Left ventricle myocardium inferior (tissue), 1 donor: ENCODE measurements at regions of chr21 and their contacts with region 1.

Region 1: DNA sequence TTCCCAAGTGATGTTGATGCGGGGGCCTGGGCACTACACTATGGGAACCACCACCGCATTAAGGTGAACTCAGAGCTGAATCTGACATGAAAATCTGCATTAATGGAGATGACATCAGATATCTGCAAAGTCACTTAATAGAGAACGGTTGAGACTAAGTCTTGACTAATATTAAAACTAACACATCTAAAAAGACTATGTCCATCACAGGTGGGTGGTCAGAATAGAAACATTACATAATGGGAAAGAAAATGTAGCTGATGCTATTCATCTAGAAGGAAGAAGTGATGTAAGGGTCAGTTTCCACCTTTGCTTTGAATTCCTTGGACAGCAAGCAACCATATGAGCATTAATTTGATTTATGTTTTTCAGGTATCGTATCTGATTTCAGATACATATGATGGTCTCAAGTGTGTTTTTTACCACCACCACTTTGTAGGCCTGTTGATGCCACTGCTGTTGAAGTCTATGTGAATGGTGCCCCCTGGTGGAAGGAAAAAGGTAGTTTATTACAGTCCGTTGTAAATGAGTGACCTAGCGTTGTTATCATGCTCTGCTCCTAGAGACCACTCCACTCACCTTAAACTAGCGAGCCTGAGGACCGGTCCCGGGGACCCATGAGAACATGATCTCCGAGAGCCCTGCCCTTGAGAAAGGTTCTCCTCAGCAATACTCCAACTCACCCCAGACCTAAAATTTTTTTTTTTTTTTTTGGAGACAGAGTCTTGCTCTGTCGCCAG is 73.5 kb downstream of the BACH1 start:
- DNase-seq: no peak
- H3K4me3 ChIP-seq: no peak overlapping the region
- H3K27ac ChIP-seq: no peak overlapping the region
- H3K4me1 ChIP-seq: peaks cover 7% of the 10 kb centered on the region
- H3K27me3 ChIP-seq: no peaks in the 10 kb centered on the region
- CTCF ChIP-seq: peak; percentile 76

Region 2: GRCh38 chr21:29168886-29169285 is 203.3 kb before region 1 on chr21:
- intact Hi-C with region 1: loop called (anchors 5 kb)
- DNase-seq: no peak
- H3K4me3 ChIP-seq: no peak overlapping the region
- H3K27ac ChIP-seq: no peak overlapping the region
- H3K4me1 ChIP-seq: peaks cover 8% of the 10 kb centered on the region
- H3K27me3 ChIP-seq: no peaks in the 10 kb centered on the region
- CTCF ChIP-seq: no peak

Region 3: GRCh38 chr21:29298348-29299045 is 73.7 kb before region 1 on chr21 and contains the start of gene BACH1:
- intact Hi-C with region 1: no loop called
- DNase-seq: peak; percentile 90
- H3K4me3 ChIP-seq: peak within 1 kb of the TSS; percentile 85
- H3K27ac ChIP-seq: peak within 1 kb of the TSS; percentile 95
- H3K4me1 ChIP-seq: peaks cover 55% of the 10 kb centered on the region
- H3K27me3 ChIP-seq: no peaks in the 10 kb centered on the region
- CTCF ChIP-seq: peak; percentile 61
- total RNA-seq, gene BACH1: 38.3 TPM